ENCODE measurements at regions of chr1 and their contacts with region 1.

Region 1: GRCh38 chr1:51878616-51879336 is at the start of gene NRDC:
- DNase-seq: peak; percentile 98 to 99
- H3K4me3 ChIP-seq: peak within 1 kb of the TSS; percentile 83 to 96 (median 93)
- H3K27ac ChIP-seq: peak within 1 kb of the TSS; percentile 95
- H3K4me1 ChIP-seq: peaks cover 2 to 7% (median 3%) of the 10 kb centered on the region in 4 experiments; a peak in 4 of 7 replicates
- H3K27me3 ChIP-seq: no peaks in the 10 kb centered on the region; a peak in 1 of 7 replicates
- CTCF ChIP-seq: no peak
- EP300 ChIP-seq: peak; percentile 9 to 92; a peak in 1 of 3 replicates
- POLR2A ChIP-seq: peak; percentile 73 to 80
- RAD21 ChIP-seq: no peak
- total RNA-seq, gene NRDC: 177 and 182 TPM in 2 replicates

Region 2: GRCh38 chr1:51861669-51862068 is 17.1 kb before region 1 on chr1:
- CTCF ChIA-PET with region 1: no interaction called
- POLR2A ChIA-PET with region 1: interaction called, 10 read pairs
- DNase-seq: no peak
- H3K4me3 ChIP-seq: no peak overlapping the region
- H3K27ac ChIP-seq: no peak overlapping the region
- H3K4me1 ChIP-seq: peaks cover 0 to 9% (median 6%) of the 10 kb centered on the region in 4 experiments; a peak in 4 of 7 replicates
- H3K27me3 ChIP-seq: no peaks in the 10 kb centered on the region
- CTCF ChIP-seq: no peak
- EP300 ChIP-seq: no peak
- POLR2A ChIP-seq: no peak
- RAD21 ChIP-seq: no peak

Measured in H1 (cell line).